Naive thymus-derived CD4-positive, alpha-beta T cell (primary cell): ENCODE measurements at regions of chr21 and their contacts with region 1.

Region 1: DNA sequence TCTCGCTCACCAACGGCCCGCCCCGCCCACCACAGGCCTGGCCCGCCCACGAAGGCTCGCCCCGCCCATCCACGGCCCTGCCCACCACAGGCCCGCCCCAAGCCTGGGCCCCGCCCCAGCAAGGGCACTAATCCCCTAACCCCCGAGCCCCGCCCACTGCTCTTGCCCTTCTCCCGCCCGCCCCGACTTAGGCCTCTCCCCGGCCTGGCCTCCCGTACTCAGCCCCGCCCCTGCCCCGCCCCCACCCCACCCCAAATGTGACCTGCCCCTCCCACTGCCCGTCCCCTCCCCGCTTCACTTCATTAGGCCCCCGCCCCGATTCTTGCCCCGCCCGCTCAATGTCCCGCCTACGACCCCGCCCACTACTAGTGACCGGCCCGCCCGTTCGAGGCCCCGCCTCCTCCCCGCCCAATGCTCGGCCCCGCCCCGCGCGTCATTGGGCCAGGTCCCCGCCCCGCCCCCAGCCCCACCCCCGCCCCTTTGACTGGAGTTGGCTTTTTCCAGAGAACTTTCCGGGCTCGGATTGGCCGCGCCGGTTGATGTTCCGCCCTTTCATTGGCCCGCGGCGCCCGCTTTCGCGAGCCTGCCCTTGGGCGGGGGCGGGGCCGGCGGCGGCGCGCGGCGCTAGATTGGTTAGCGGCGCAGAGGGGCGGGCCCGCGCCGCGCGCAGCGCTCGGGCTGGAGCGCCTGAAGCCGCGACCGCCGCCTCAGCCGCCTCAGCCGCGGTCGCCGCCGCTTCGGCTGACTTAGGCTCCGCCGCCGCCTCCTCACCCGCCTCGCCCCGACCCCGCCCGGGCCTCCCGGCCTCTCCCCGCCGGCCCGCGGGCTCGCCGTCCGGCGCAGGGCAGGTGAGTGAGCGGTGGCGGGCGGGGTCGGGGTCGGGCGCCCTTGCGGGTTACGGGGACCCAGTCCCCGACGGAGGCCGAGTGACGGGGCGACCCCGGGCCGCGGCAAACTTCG is at the start of gene PCBP3:
- DNase-seq: peak; percentile 93 to 99 (median 96)
- ATAC-seq: peak; percentile 87
- H3K4me3 ChIP-seq: no peak within 1 kb of the TSS
- H3K4me3 Mint-ChIP-seq: peak within 1 kb of the TSS; percentile 74 to 86 (median 81)
- H3K27ac ChIP-seq: peak within 1 kb of the TSS; percentile 57
- H3K27ac Mint-ChIP-seq: peak within 1 kb of the TSS in 7 of 9 donors; percentile 28 to 84 (median 74)
- H3K4me1 ChIP-seq: peaks cover 6 to 38% of the 10 kb centered on the region in 2 donors
- H3K4me1 Mint-ChIP-seq: peaks cover 15 to 51% (median 41%) of the 10 kb centered on the region in 7 donors
- H3K27me3 ChIP-seq: peaks cover 0 to 16% of the 10 kb centered on the region in 2 donors
- H3K27me3 Mint-ChIP-seq: peaks cover 0 to 19% (median 6%) of the 10 kb centered on the region in 5 donors
- total RNA-seq, gene PCBP3: 1.2 to 5.2 (median 4.0) TPM

Region 2: GRCh38 chr21:44920694-44921604 is 722.4 kb before region 1 on chr21 and contains the start of gene ITGB2:
- CTCF ChIA-PET with region 1: no interaction called
- POLR2A ChIA-PET with region 1: no interaction called
- intact Hi-C with region 1: loop called in 1 of 2 experiments (anchors 5 kb)
- DNase-seq: peak in 5 of 9 donors; percentile 56 to 66 (median 58)
- ATAC-seq: peak; percentile 73
- H3K4me3 ChIP-seq: peak within 1 kb of the TSS; percentile 88
- H3K4me3 Mint-ChIP-seq: peak within 1 kb of the TSS; percentile 89 to 100 (median 99)
- H3K27ac ChIP-seq: peak within 1 kb of the TSS; percentile 72
- H3K27ac Mint-ChIP-seq: peak within 1 kb of the TSS; percentile 76 to 98 (median 95)
- H3K4me1 ChIP-seq: peaks cover 43 to 61% of the 10 kb centered on the region in 2 donors
- H3K4me1 Mint-ChIP-seq: peaks cover 63 to 85% (median 75%) of the 10 kb centered on the region in 7 donors
- H3K27me3 ChIP-seq: no peaks in the 10 kb centered on the region
- H3K27me3 Mint-ChIP-seq: no peaks in the 10 kb centered on the region
- total RNA-seq, gene ITGB2: 280 to 877 (median 371) TPM

Region 3: GRCh38 chr21:45478115-45478801 is 165.0 kb before region 1 on chr21:
- CTCF ChIA-PET with region 1: no interaction called
- POLR2A ChIA-PET with region 1: no interaction called
- intact Hi-C with region 1: loop called (anchors 1 to 2 kb)
- DNase-seq: peak; percentile 66 to 88 (median 84)
- ATAC-seq: peak; percentile 88
- H3K4me3 ChIP-seq: peak overlapping the region; percentile 78
- H3K4me3 Mint-ChIP-seq: peak overlapping the region; percentile 78 to 91 (median 84)
- H3K27ac ChIP-seq: peak overlapping the region; percentile 93
- H3K27ac Mint-ChIP-seq: peak overlapping the region; percentile 93 to 100 (median 99)
- H3K4me1 ChIP-seq: peaks cover 14 to 53% of the 10 kb centered on the region in 2 donors
- H3K4me1 Mint-ChIP-seq: peaks cover 27 to 65% (median 43%) of the 10 kb centered on the region in 7 donors
- H3K27me3 ChIP-seq: no peaks in the 10 kb centered on the region
- H3K27me3 Mint-ChIP-seq: no peaks in the 10 kb centered on the region

Region 4: GRCh38 chr21:45590246-45590725 is 53.0 kb before region 1 on chr21:
- CTCF ChIA-PET with region 1: no interaction called
- POLR2A ChIA-PET with region 1: no interaction called
- intact Hi-C with region 1: loop called (anchors 1 kb)
- DNase-seq: peak in 3 of 9 donors; percentile 72 to 81 (median 78)
- ATAC-seq: peak; percentile 83
- H3K4me3 ChIP-seq: peak overlapping the region; percentile 42
- H3K4me3 Mint-ChIP-seq: peak overlapping the region in 8 of 10 donors; percentile 21 to 69 (median 48)
- H3K27ac ChIP-seq: peak overlapping the region; percentile 65
- H3K27ac Mint-ChIP-seq: peak overlapping the region in 1 of 9 donors; percentile 16
- H3K4me1 ChIP-seq: peaks cover 21 to 22% of the 10 kb centered on the region in 2 donors
- H3K4me1 Mint-ChIP-seq: peaks cover 0 to 22% (median 7%) of the 10 kb centered on the region in 7 donors
- H3K27me3 ChIP-seq: no peaks in the 10 kb centered on the region
- H3K27me3 Mint-ChIP-seq: peaks cover 0 to 17% (median 11%) of the 10 kb centered on the region in 5 donors

Region 5: DNA sequence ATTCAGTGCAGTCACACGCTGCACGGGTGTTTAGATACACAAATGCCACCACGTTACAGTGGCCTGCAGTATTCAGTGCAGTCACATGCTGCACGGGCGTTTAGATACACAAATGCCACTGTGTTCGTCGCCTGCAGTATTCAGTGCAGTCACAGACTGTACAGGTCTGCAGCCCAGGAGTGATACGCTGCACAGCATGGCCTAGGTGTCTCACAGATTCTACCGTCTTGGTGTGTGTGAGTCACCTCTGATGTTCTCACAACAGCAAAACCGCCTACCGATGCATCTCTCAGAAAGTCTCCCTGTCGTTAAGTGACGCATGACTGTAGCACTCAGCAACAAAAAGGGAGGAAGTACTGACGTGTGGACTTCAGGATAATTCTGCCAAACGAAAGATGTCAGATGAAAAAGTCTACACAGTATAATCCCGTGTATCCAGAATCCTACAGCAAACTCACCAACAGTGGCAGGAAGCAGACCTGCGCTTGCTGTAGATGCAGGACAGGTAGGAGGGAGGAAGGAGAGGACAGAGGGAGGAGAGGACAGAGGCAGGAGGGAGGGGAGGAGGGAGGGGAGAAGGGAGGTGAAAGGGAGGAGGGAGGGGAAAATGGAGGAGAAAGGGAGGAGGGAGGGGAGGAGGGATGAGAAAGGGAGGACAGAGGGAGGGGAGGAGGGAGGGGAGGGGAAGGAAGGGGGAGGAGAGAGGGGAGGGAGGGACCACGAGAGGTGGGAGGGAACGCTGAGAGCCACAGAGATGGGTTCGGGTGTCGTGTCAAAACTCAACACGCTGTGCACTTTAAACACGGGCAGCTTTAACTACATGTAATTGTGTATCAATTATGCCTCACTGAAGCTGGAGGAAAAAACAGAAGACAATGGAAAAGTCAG is 36.0 kb before region 1 on chr21:
- CTCF ChIA-PET with region 1: no interaction called
- POLR2A ChIA-PET with region 1: no interaction called
- intact Hi-C with region 1: no loop called
- DNase-seq: peak in 7 of 9 donors; percentile 23 to 76 (median 66)
- ATAC-seq: peak; percentile 88
- H3K4me3 ChIP-seq: no peak overlapping the region
- H3K4me3 Mint-ChIP-seq: peak overlapping the region in 9 of 10 donors; percentile 23 to 88 (median 62)
- H3K27ac ChIP-seq: peak overlapping the region; percentile 65
- H3K27ac Mint-ChIP-seq: peak overlapping the region; percentile 81 to 99 (median 90)
- H3K4me1 ChIP-seq: peaks cover 0 to 12% of the 10 kb centered on the region in 2 donors
- H3K4me1 Mint-ChIP-seq: peaks cover 3 to 27% (median 14%) of the 10 kb centered on the region in 7 donors
- H3K27me3 ChIP-seq: no peaks in the 10 kb centered on the region
- H3K27me3 Mint-ChIP-seq: peaks cover 0 to 18% (median 0%) of the 10 kb centered on the region in 5 donors

Region 6: DNA sequence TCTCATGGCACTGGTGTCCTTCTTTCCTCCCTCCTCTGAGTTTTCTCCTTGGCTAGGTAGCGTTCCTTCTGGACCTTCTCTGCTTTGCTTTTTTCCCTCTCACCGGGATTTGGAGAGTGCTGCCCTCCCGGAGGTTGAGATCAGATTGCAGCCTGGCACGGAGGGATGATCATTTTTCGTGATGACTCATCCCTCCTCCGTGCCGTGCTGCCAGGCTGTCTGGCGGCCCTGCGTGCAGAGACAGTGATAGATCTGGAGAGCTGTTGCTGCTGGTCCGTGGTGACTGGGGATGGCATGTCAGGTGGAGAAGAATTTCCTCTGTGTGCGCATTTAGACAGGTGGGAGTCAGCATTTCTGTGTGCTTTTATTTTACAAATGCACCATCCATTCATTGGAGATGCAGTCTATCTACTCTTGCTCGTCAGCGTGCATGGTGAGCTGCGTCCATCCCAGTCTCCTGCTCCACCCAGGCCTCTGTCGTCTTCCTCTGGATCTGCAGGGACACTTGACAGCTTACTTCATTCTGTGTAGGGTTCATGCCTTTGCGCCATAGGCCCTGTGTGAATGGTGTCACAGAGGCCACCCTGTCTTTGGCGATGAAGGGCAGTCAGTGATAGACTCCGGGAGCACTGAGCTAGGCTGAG is 104.6 kb after region 1 on chr21:
- CTCF ChIA-PET with region 1: no interaction called
- POLR2A ChIA-PET with region 1: no interaction called
- intact Hi-C with region 1: no loop called
- DNase-seq: no peak
- ATAC-seq: no peak
- H3K4me3 ChIP-seq: no peak overlapping the region
- H3K4me3 Mint-ChIP-seq: no peak overlapping the region
- H3K27ac ChIP-seq: no peak overlapping the region
- H3K27ac Mint-ChIP-seq: peak overlapping the region in 1 of 9 donors; percentile 65
- H3K4me1 ChIP-seq: no peaks in the 10 kb centered on the region
- H3K4me1 Mint-ChIP-seq: peaks cover 0 to 22% (median 11%) of the 10 kb centered on the region in 7 donors
- H3K27me3 ChIP-seq: no peaks in the 10 kb centered on the region
- H3K27me3 Mint-ChIP-seq: no peaks in the 10 kb centered on the region

Region 7: GRCh38 chr21:45768751-45769070 is 125.4 kb after region 1 on chr21:
- CTCF ChIA-PET with region 1: no interaction called
- POLR2A ChIA-PET with region 1: no interaction called
- intact Hi-C with region 1: loop called (anchors 1 kb)
- DNase-seq: peak in 1 of 9 donors; percentile 45
- ATAC-seq: no peak
- H3K4me3 ChIP-seq: no peak overlapping the region
- H3K4me3 Mint-ChIP-seq: peak overlapping the region in 7 of 10 donors; percentile 43 to 76 (median 56)
- H3K27ac ChIP-seq: no peak overlapping the region
- H3K27ac Mint-ChIP-seq: peak overlapping the region; percentile 53 to 97 (median 94)
- H3K4me1 ChIP-seq: peaks cover 0 to 29% of the 10 kb centered on the region in 2 donors
- H3K4me1 Mint-ChIP-seq: peaks cover 15 to 51% (median 38%) of the 10 kb centered on the region in 7 donors
- H3K27me3 ChIP-seq: no peaks in the 10 kb centered on the region
- H3K27me3 Mint-ChIP-seq: no peaks in the 10 kb centered on the region

Region 8: GRCh38 chr21:45981151-45982089 is 338.1 kb after region 1 on chr21 and contains the start of gene COL6A1:
- CTCF ChIA-PET with region 1: no interaction called
- POLR2A ChIA-PET with region 1: no interaction called
- intact Hi-C with region 1: loop called (anchors 5 to 10 kb)
- DNase-seq: peak in 8 of 9 donors; percentile 36 to 69 (median 58)
- ATAC-seq: peak; percentile 79
- H3K4me3 ChIP-seq: peak within 1 kb of the TSS; percentile 52
- H3K4me3 Mint-ChIP-seq: peak within 1 kb of the TSS; percentile 44 to 76 (median 66)
- H3K27ac ChIP-seq: peak within 1 kb of the TSS; percentile 15
- H3K27ac Mint-ChIP-seq: no peak within 1 kb of the TSS
- H3K4me1 ChIP-seq: peaks cover 6 to 7% of the 10 kb centered on the region in 2 donors
- H3K4me1 Mint-ChIP-seq: peaks cover 0 to 16% (median 11%) of the 10 kb centered on the region in 7 donors
- H3K27me3 ChIP-seq: peaks cover 0 to 13% of the 10 kb centered on the region in 2 donors
- H3K27me3 Mint-ChIP-seq: peaks cover 0 to 22% (median under 1%) of the 10 kb centered on the region in 5 donors
- total RNA-seq, gene COL6A1: 0.22 to 17.1 (median 9.5) TPM